ENCODE measurements at regions of chr5 and their contacts with region 1.

Region 1: GRCh38 chr5:56012281-56012963 is 17.7 kb upstream of the IL6ST start:
- DNase-seq: peak; percentile 21
- H3K4me3 Mint-ChIP-seq: peak overlapping the region; percentile 0
- H3K27ac Mint-ChIP-seq: peak overlapping the region; percentile 12
- H3K4me1 Mint-ChIP-seq: peaks cover 32% of the 10 kb centered on the region
- H3K27me3 Mint-ChIP-seq: no peaks in the 10 kb centered on the region

Region 2: DNA sequence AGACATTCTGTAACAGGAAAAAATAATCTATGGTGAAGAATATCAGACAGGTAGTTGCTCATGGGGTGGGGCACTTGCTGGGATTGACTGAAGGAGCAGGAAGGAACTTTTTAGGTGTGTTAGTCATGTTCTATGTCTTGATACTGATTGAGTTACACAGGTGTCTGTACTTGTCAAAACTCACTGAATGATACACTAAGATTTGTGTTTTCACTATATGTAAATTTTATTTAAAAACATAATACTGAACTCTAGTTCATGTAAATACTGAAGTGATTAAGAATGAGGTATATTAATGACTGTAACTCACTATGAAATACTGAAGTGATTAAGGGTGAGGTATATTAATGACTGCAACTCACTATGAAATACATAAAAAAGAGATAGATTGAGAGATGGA is 46.1 kb before region 1 on chr5:
- intact Hi-C with region 1: loop called (anchors 1 kb)
- DNase-seq: no peak
- H3K4me3 Mint-ChIP-seq: no peak overlapping the region
- H3K27ac Mint-ChIP-seq: peak overlapping the region; percentile 67
- H3K4me1 Mint-ChIP-seq: peaks cover 49% of the 10 kb centered on the region
- H3K27me3 Mint-ChIP-seq: no peaks in the 10 kb centered on the region

Region 3: GRCh38 chr5:56026863-56027300 is 14.5 kb after region 1 on chr5:
- intact Hi-C with region 1: loop called (anchors 1 kb)
- DNase-seq: no peak
- H3K4me3 Mint-ChIP-seq: no peak overlapping the region
- H3K27ac Mint-ChIP-seq: no peak overlapping the region
- H3K4me1 Mint-ChIP-seq: peaks cover 23% of the 10 kb centered on the region
- H3K27me3 Mint-ChIP-seq: peaks cover 32% of the 10 kb centered on the region

Region 4: DNA sequence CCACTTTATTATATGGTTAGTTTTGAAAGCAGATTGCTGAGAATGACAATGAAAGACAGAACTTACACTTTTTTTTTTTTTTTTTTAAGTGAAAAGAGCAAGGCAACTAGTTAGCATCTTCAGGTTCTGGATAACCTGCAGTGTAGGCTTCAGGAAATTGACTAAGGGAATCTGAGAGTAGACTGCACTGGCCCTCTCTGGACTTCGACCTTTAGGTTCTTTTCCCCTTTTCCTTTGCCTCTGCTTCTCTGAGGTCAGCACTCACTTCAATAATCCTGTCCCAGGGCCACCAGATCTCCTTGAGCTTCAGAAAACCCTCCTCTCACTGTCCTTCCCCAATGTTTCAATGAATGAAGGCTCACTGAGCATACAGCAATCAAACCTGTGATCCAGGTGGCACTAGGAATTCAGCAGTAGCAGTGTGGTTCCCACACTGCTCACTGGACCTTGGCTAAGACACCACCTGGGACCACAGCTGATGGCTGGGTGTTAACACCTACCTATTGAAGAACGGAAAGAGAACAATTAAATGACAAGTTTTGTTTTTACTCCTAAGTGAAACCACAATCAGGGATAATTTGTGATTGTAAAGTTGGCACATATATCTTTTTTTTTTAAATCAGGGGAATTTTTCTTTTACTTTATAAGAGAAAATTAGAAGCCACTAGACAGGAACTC is 68.1 kb after region 1 on chr5:
- intact Hi-C with region 1: loop called (anchors 1 kb)
- DNase-seq: no peak
- H3K4me3 Mint-ChIP-seq: peak overlapping the region; percentile 38
- H3K27ac Mint-ChIP-seq: peak overlapping the region; percentile 37
- H3K4me1 Mint-ChIP-seq: peaks cover 45% of the 10 kb centered on the region
- H3K27me3 Mint-ChIP-seq: no peaks in the 10 kb centered on the region